ENCODE measurements at regions of chr6 and their contacts with region 1.

Region 1: GRCh38 chr6:26607434-26608230 is 10.9 kb downstream of the ABT1 start:
- DNase-seq: peak; percentile 28
- ATAC-seq: peak; percentile 78 to 84

Region 2: DNA sequence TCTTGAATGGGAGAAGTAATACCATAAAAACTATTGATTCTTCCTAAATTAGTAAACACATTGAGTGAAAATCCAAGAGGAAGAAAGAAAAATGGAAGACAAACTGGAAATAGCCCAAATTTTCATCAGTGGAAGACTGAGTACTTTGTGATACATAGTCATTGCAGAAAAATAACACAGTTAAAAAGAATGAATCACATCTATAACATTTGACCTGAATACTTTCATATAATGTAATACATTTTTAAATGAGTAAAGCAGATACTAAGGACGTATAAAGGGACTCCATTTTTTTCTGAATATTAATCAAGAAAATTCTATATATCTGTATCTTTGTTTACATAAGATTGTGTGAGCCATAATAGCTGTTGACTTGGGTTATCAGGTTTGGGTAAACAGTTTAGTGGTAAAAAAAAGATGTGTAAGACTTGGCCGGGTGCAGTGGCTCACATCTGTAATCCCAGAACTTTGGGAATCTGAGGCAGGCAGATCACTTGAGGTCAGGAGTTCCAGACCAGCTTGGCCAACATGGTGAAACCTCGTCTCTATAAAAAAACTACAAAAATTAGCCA is 672.8 kb before region 1 on chr6:
- intact Hi-C with region 1: no loop called
- DNase-seq: no peak
- ATAC-seq: no peak

Region 3: GRCh38 chr6:25962149-25963127 is 645.2 kb before region 1 on chr6 and contains the start of gene TRIM38:
- intact Hi-C with region 1: no loop called
- DNase-seq: peak; percentile 75
- ATAC-seq: peak; percentile 93 to 96
- total RNA-seq, gene TRIM38: 4.7 to 5.3 TPM

Region 4: DNA sequence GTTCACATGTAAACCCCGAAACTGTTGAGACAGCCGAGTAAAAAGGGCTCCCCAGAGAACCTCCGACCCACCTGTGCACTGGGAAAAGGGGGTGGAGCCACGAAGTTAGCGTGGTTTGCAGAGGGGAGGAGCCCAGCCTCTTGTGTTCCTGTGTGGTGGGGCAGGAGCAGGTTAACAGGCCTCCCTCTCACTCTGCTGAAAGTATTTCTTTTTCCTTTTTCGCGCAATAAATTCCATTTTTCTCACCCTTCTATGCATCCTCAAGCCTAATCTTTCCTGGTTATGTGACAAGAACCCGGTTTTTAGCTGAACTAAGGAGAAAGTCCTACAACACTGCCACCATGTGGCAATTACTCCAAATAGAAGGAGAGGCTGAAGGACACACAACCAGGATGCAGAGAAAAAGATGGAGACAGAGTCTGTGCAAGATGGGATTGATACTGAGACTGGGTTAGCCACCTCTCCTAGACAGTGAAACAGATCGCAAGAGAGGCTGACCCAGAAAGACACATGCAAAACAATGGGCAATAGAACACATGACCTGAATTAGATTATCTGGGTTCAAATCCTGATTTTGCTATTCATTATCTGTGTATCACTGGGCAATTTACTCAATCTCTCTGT is 471.2 kb after region 1 on chr6:
- intact Hi-C with region 1: loop called (anchors 1 to 5 kb)
- DNase-seq: no peak
- ATAC-seq: peak; percentile 55 to 81